Dendritic cell treated with granulocyte-macrophage colony-stimulating factor and Interleukin-4, amounts not matched to agents 40 ng/mL and 50 ng/mL, for 4 days (primary cell): ENCODE measurements at regions of chr12 and their contacts with region 1.

Region 1: GRCh38 chr12:119412811-119413794 is 78.6 kb downstream of the CCDC60 start:
- H3K4me3 Mint-ChIP-seq: no peak overlapping the region
- H3K27ac Mint-ChIP-seq: no peak overlapping the region
- H3K4me1 Mint-ChIP-seq: no peaks in the 10 kb centered on the region
- H3K27me3 Mint-ChIP-seq: peaks cover 5% of the 10 kb centered on the region

Region 2: DNA sequence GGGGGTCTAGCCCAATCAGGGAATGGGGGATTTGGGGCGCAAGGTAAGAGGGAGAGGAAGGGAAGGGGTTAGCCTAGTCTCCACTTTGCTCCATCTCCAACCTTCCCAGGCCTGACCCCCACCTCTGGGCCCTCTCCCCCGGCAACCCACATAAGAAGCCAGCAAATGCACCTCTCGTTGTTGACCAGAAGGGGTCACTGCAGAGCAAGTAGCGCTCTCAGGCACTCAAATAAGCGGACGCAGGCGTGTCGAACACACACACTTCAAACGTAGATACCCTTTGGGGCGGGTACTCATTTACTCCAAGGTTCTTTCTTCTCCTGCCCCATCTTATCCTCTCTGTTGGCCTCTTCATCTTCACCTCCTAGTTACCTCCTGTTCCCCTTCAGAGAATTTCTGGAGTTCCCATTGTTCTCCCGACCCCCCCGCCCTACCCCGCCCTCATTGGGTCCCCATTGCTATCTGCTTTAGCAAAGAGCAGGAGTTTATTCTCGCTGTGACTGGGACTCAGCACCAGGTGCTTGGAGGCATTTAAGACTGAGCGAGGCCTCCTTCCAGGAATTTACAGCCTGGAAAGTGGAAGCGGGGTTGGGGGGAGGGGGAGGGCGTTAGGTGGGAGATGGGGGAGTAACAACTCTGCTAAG is 433.2 kb before region 1 on chr12:
- intact Hi-C with region 1: loop called (anchors 5 kb)
- H3K4me3 Mint-ChIP-seq: no peak overlapping the region
- H3K27ac Mint-ChIP-seq: no peak overlapping the region
- H3K4me1 Mint-ChIP-seq: no peaks in the 10 kb centered on the region
- H3K27me3 Mint-ChIP-seq: peaks cover 42% of the 10 kb centered on the region